ENCODE measurements at regions of chr18 and their contacts with region 1.

Region 1: GRCh38 chr18:41789001-41789400 is 166.0 kb upstream of the PIK3C3 start:
- DNase-seq: no peak
- ATAC-seq: no peak
- H3K4me3 ChIP-seq: no peak overlapping the region
- H3K27ac ChIP-seq: no peak overlapping the region
- H3K4me1 ChIP-seq: no peaks in the 10 kb centered on the region
- H3K27me3 ChIP-seq: no peaks in the 10 kb centered on the region
- CTCF ChIP-seq: no peak
- POLR2A ChIP-seq: no peak

Region 2: DNA sequence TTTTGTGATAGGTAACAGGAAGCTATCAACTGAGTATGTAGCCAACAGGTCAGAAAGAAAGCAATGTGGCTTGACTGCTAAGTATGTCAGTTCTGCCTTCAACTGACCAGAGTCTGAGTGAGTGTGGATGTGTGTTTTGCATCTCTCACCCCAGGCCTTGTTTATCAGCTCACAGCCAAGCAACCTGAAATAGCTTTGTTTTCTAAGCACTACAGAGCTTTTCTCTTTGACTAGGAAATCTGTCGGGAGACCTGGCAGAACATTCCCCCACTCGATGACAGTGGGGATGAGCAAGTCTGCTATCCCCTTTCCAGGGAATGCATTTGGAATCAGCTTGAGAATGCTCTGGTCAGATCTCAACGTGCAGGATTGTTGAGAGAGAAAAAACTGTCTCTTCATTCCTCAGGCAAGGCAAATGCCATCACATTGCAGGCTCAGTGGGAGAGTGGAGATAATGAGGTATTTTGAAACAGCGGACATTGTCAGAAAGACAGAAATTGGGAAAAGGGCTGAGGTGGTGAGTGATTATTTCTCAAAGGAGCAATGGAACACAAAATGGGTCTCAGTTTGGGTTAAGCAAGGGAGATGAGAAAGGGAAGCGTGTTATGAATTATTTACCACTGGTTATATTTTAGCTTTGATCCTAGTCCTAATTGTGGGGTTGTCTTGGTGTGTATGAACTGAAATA is 67.8 kb before region 1 on chr18:
- intact Hi-C with region 1: loop called (anchors 10 kb)
- DNase-seq: no peak
- ATAC-seq: no peak
- H3K4me3 ChIP-seq: no peak overlapping the region
- H3K27ac ChIP-seq: no peak overlapping the region
- H3K4me1 ChIP-seq: no peaks in the 10 kb centered on the region
- H3K27me3 ChIP-seq: no peaks in the 10 kb centered on the region
- CTCF ChIP-seq: no peak
- POLR2A ChIP-seq: no peak